ENCODE measurements at regions of chr5 and their contacts with region 1.

Region 1: DNA sequence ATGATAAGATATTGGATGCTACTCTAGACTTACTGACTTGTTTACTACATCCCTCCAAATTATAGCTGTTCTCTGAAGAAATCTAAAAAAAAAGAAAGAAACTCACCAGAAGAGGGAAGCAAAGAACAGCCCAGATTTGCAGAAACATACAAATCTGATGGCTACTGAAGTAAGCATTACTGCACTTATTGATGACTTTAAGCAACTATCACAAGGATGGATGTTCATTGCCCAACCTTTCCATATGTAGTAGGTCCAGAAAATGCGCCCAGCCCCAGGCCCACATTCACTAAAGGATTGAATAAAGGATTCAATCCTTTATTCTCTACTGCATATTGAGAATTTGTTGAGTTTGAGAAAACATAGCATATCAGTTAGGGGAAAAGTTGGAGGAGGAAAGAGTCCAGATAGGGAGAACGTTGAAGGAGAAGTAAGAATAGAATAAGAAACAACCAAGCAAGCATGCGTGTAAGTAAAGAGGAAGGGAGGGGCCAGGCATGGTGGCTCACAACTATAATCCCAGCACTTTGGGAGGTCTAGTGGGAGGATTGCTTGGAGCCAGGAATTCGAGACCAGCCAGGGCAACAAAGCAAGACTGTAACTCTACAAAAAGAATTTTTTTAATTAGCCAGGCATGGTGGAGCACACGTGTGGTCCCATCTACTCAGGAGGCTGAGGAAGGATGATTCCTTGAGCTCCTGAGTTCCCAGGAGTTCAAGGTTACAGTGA is 33.8 kb upstream of the DTWD2 start:
- DNase-seq: peak; percentile 58
- H3K4me3 ChIP-seq: no peak overlapping the region
- H3K27ac ChIP-seq: no peak overlapping the region
- H3K4me1 ChIP-seq: no peaks in the 10 kb centered on the region
- H3K27me3 ChIP-seq: no peaks in the 10 kb centered on the region
- CTCF ChIP-seq: peak; percentile 64

Region 2: GRCh38 chr5:118529361-118530144 is 492.6 kb before region 1 on chr5:
- CTCF ChIA-PET with region 1: no interaction called
- POLR2A ChIA-PET with region 1: no interaction called
- intact Hi-C with region 1: no loop called
- DNase-seq: no peak
- H3K4me3 ChIP-seq: no peak overlapping the region
- H3K27ac ChIP-seq: no peak overlapping the region
- H3K4me1 ChIP-seq: no peaks in the 10 kb centered on the region
- H3K27me3 ChIP-seq: no peaks in the 10 kb centered on the region
- CTCF ChIP-seq: no peak

Region 3: GRCh38 chr5:119255571-119256356 is 233.6 kb after region 1 on chr5:
- CTCF ChIA-PET with region 1: no interaction called
- POLR2A ChIA-PET with region 1: no interaction called
- intact Hi-C with region 1: loop called (anchors 10 kb)
- DNase-seq: peak; percentile 58
- H3K4me3 ChIP-seq: no peak overlapping the region
- H3K27ac ChIP-seq: no peak overlapping the region
- H3K4me1 ChIP-seq: no peaks in the 10 kb centered on the region
- H3K27me3 ChIP-seq: no peaks in the 10 kb centered on the region
- CTCF ChIP-seq: peak; percentile 59

Region 4: DNA sequence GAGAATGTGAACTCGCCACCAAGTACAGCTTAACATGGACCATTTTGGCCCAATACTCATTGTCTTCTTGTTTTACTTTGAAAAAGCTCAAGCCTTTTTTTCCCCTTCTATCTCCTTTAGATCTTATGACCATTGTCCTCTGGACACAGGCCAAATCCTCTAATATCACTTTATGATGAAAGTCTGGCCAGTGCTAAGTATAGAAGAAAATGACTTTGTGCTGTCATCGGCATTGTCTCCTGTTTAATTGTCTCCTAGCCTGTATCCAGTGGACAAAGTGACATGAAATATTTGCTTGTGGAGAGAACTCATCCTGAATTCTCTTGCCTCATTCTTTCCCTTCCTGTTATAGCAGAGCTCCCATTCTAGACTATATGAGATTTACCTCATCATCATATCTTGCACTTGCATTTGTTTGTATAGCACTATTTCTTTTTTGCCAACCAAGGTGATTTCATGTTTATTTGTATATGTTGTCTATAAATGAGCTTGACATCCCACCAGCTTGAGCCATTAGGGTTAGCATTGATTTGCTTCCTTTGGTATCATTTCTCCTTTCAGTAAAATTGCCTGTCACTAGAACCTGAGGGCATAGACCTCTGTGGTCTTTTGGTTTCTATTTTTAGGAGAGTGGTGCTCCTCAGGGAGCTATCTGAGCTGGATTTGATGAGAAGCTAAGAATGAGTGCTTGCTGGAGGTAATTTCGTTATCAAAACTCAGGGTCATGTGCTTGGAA is 314.8 kb after region 1 on chr5:
- CTCF ChIA-PET with region 1: interaction called, 8 read pairs
- POLR2A ChIA-PET with region 1: no interaction called
- intact Hi-C with region 1: loop called (anchors 1 kb)
- DNase-seq: no peak
- H3K4me3 ChIP-seq: no peak overlapping the region
- H3K27ac ChIP-seq: no peak overlapping the region
- H3K4me1 ChIP-seq: no peaks in the 10 kb centered on the region
- H3K27me3 ChIP-seq: no peaks in the 10 kb centered on the region
- CTCF ChIP-seq: no peak

Measured in A673 (cell line).